Calu3 (cell line): ENCODE measurements at regions of chr20 and their contacts with region 1.

Region 1: DNA sequence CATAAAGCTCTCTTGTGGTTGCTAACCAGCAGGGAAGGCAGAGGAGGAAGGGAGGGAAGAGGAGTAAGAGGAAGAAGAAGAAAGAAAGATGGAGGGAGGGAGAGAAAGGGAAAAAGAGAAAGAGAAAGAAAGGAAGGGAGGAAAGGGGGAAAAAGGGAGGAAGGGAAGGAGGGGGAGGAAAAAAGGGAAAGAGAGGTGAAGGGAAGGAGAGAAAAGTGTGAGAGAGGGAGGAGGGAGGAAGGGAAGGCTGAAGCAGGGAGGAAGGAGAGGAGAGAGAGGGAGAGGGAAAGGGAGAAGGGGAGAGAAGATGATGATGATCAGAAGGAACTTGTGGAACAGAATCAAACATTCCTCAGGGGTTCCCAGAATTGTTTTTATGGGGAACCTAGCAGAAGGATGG is 57.5 kb upstream of the TOX2 start:
- DNase-seq: no peak
- H3K4me3 Mint-ChIP-seq: no peak overlapping the region
- H3K27ac Mint-ChIP-seq: no peak overlapping the region
- H3K4me1 Mint-ChIP-seq: no peaks in the 10 kb centered on the region
- H3K27me3 Mint-ChIP-seq: peaks cover 25% of the 10 kb centered on the region
- CTCF ChIP-seq: no peak

Region 2: DNA sequence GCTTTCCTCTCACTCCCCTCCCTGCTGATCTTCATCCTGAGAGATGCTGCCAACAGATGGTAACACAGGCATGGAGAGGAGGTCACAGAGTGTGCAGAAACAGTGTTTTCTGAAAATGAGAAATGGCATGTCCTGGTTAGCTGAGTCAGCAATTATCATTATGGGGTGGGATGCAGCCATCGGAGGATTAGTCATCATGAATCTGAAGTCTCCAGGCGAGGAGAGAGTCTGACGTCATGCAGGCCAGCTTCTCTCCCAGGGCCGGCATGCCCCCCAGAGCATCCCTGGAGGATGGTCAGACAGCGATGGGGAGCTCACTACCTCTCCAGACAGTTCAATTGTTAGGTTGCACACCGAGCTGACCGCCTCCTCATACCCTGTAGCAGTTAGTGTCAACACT is 125.7 kb before region 1 on chr20:
- CTCF ChIA-PET with region 1: interaction called, 14 read pairs
- intact Hi-C with region 1: no loop called
- DNase-seq: no peak
- H3K4me3 Mint-ChIP-seq: no peak overlapping the region
- H3K27ac Mint-ChIP-seq: no peak overlapping the region
- H3K4me1 Mint-ChIP-seq: no peaks in the 10 kb centered on the region
- H3K27me3 Mint-ChIP-seq: peaks cover 71% of the 10 kb centered on the region
- CTCF ChIP-seq: no peak

Region 3: GRCh38 chr20:43799150-43799711 is 57.9 kb before region 1 on chr20:
- CTCF ChIA-PET with region 1: no interaction called
- intact Hi-C with region 1: no loop called
- DNase-seq: no peak
- H3K4me3 Mint-ChIP-seq: no peak overlapping the region
- H3K27ac Mint-ChIP-seq: no peak overlapping the region
- H3K4me1 Mint-ChIP-seq: no peaks in the 10 kb centered on the region
- H3K27me3 Mint-ChIP-seq: peaks cover 63% of the 10 kb centered on the region
- CTCF ChIP-seq: no peak

Region 4: DNA sequence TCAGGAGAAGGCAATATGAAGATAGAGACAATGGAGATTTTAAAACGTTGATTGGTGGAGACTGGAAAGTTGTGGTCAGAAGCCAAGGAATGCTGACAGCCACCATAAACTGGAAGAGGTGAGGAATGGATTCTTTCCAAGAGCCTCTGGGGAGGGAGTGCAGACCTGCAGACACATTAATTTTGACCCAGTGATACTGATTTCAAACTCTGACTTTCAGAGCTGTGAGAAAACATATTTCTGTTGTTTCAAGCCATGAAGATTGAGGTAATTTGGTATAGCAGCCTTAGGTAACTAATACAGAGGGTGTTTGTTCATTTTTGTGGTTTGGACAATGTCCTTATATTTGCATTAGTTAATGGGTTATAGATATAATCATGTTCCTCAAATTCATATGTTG is 45.0 kb before region 1 on chr20:
- CTCF ChIA-PET with region 1: no interaction called
- intact Hi-C with region 1: no loop called
- DNase-seq: no peak
- H3K4me3 Mint-ChIP-seq: no peak overlapping the region
- H3K27ac Mint-ChIP-seq: no peak overlapping the region
- H3K4me1 Mint-ChIP-seq: no peaks in the 10 kb centered on the region
- H3K27me3 Mint-ChIP-seq: peaks cover 17% of the 10 kb centered on the region
- CTCF ChIP-seq: no peak